ENCODE measurements at regions of chr16 and their contacts with region 1.

Region 1: GRCh38 chr16:86343027-86343787 is 167.1 kb upstream of the FOXF1 start:
- DNase-seq: peak; percentile 55 to 84
- H3K4me3 ChIP-seq: peak overlapping the region; percentile 17 to 45
- H3K27ac ChIP-seq: peak overlapping the region; percentile 82 to 88
- H3K4me1 ChIP-seq: peaks cover 3 to 16% of the 10 kb centered on the region in 2 donors
- H3K27me3 ChIP-seq: no peaks in the 10 kb centered on the region
- CTCF ChIP-seq: no peak

Region 2: GRCh38 chr16:86252596-86252995 is 90.6 kb before region 1 on chr16:
- intact Hi-C with region 1: no loop called
- DNase-seq: no peak
- H3K4me3 ChIP-seq: no peak overlapping the region
- H3K27ac ChIP-seq: no peak overlapping the region
- H3K4me1 ChIP-seq: no peaks in the 10 kb centered on the region
- H3K27me3 ChIP-seq: no peaks in the 10 kb centered on the region
- CTCF ChIP-seq: no peak

Region 3: GRCh38 chr16:86363836-86364618 is 20.8 kb after region 1 on chr16:
- intact Hi-C with region 1: loop called (anchors 2 kb)
- DNase-seq: no peak
- H3K4me3 ChIP-seq: no peak overlapping the region
- H3K27ac ChIP-seq: no peak overlapping the region
- H3K4me1 ChIP-seq: peaks cover 0 to 4% of the 10 kb centered on the region in 2 donors
- H3K27me3 ChIP-seq: no peaks in the 10 kb centered on the region
- CTCF ChIP-seq: no peak

Region 4: GRCh38 chr16:86509759-86510464 is 166.7 kb after region 1 on chr16:
- intact Hi-C with region 1: loop called (anchors 2 kb)
- DNase-seq: no peak
- H3K4me3 ChIP-seq: peak overlapping the region; percentile 51 to 78
- H3K27ac ChIP-seq: peak overlapping the region; percentile 48 to 50
- H3K4me1 ChIP-seq: peaks cover 5 to 38% of the 10 kb centered on the region in 2 donors
- H3K27me3 ChIP-seq: peaks cover 45% of the 10 kb centered on the region
- CTCF ChIP-seq: no peak

Region 5: GRCh38 chr16:86519649-86520316 is 176.6 kb after region 1 on chr16:
- intact Hi-C with region 1: loop called (anchors 1 kb)
- DNase-seq: no peak
- H3K4me3 ChIP-seq: peak overlapping the region in 1 of 2 donors; percentile 33
- H3K27ac ChIP-seq: no peak overlapping the region
- H3K4me1 ChIP-seq: peaks cover 0 to 9% of the 10 kb centered on the region in 2 donors
- H3K27me3 ChIP-seq: peaks cover 13% of the 10 kb centered on the region
- CTCF ChIP-seq: peak; percentile 82 to 90 (median 87)